Panc1 (cell line): ENCODE measurements at regions of chr21 and their contacts with region 1.

Region 1: GRCh38 chr21:17976139-17976538 is 157.0 kb upstream of the C21orf91 start:
- DNase-seq: no peak
- ATAC-seq: no peak
- H3K4me3 ChIP-seq: no peak overlapping the region
- H3K27ac ChIP-seq: no peak overlapping the region
- H3K4me1 ChIP-seq: no peaks in the 10 kb centered on the region
- H3K27me3 ChIP-seq: no peaks in the 10 kb centered on the region
- CTCF ChIP-seq: no peak

Region 2: DNA sequence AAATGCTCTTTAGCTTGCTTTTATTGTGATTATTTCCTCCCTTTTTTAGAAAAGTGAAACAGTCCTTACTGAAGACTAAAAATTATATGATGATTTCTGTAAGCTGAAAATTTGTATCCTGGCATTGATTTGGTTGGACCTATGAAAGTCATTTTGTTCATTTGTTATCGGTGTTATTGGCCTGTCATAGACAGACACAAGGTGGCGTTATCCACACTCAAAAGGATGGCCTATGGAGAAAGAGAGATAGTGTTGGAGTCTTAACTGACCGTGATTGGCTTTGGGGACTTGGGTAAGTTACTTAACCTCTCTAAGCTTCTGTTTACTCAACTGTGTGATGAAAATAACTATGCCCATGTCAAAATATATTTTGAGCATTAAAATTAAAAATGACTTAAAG is 64.9 kb after region 1 on chr21:
- CTCF ChIA-PET with region 1: interaction called, 10 read pairs
- POLR2A ChIA-PET with region 1: no interaction called
- in situ Hi-C with region 1: no loop called
- intact Hi-C with region 1: no loop called
- DNase-seq: no peak
- ATAC-seq: no peak
- H3K4me3 ChIP-seq: no peak overlapping the region
- H3K27ac ChIP-seq: no peak overlapping the region
- H3K4me1 ChIP-seq: no peaks in the 10 kb centered on the region
- H3K27me3 ChIP-seq: no peaks in the 10 kb centered on the region
- CTCF ChIP-seq: peak; percentile 41; the same call in 1 of the 2 replicates